Transverse colon (tissue), 4 donors: ENCODE measurements at regions of chr1 and their contacts with region 1.

Region 1: DNA sequence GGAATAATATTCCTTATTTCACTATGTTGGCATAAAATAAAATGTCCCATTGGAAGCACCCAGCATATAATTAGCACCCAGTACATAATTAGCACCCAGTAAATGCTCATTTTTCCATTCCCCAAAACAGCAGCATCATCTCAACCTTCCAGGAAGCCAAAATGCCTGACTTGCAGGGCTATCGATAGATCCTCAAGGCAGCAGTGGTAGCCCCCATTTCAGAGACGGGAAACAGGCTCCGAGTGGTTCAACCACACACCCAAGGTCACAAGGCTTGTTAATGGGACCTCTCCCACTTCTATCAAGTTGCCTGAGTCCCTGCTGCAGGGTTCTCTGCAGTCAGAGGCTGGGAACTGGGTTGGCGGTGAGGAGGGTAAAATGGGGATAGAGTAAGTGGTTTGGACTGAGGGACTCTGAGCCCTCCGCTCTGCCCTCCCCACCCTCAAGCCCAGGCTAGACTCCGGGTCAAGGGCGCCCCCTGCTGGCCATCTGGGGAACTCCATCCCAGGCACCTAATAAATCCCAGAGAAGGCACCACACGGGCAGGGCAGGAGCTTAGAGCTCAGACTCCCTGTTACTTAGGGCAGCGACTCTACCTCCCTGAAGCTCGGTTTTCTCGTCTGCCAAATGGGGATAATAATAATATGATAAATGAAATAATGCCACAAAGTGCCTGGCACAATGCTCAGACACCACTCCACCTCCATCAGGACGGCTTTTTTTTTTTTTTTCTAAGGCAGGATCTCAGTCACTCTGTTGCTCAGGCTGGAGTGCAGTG is 21.9 kb upstream of the LAPTM5 start:
- DNase-seq: peak; percentile 89
- H3K4me3 ChIP-seq: no peak overlapping the region
- H3K27ac ChIP-seq: no peak overlapping the region
- H3K4me1 ChIP-seq: peaks cover 0 to 11% (median 3%) of the 10 kb centered on the region in 4 donors
- H3K27me3 ChIP-seq: no peaks in the 10 kb centered on the region
- CTCF ChIP-seq: peak; percentile 98 to 99 (median 99)
- EP300 ChIP-seq: no peak
- POLR2A ChIP-seq: no peak

Region 2: DNA sequence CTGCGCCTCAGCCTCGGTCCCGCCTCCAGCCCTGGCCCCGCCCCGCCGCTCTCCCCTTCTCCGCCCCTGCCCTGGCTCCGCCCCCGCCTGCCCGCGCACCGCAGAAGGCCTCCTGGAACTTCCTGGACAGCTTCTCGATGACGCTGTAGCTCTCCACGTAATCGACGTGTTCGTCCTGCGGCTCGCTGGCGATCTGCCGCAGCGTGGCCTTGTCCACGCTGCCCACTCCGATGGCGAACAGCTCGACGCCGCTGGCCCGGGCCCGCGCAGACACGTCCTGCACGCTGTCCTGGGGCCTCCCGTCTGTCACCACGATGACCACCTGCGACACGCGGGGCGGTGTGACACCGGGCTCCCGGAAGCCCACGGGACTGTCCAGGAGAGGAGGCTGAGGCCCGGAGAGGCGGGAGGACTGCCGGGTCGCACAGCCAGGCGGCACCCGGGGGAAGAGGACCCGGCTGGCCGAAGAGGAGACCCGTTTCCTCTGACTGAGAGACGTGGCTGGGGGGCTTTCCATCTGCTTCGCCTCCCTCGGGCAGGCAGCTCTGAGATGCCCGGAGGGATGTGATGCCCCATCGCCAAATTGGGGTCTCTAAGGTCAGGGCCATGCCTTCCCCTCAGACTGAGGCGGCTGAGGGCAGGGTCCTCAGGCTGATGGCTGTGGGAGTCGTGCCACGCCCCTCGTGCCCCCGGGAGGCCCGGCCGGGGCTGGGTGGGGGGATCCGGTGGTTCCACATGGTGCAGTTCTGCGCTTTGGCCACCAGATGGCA is 60.7 kb before region 1 on chr1:
- in situ Hi-C with region 1: loop called in 3 of 4 experiments (anchors 5 kb)
- intact Hi-C with region 1: loop called (anchors 1 kb)
- DNase-seq: peak; percentile 85
- H3K4me3 ChIP-seq: peak overlapping the region; percentile 25 to 57 (median 44)
- H3K27ac ChIP-seq: peak overlapping the region; percentile 94 to 99 (median 98)
- H3K4me1 ChIP-seq: peaks cover 5 to 15% (median 10%) of the 10 kb centered on the region in 4 donors
- H3K27me3 ChIP-seq: no peaks in the 10 kb centered on the region
- CTCF ChIP-seq: peak; percentile 99 to 100 (median 99)
- EP300 ChIP-seq: peak; percentile 53
- POLR2A ChIP-seq: peak; percentile 93

Region 3: DNA sequence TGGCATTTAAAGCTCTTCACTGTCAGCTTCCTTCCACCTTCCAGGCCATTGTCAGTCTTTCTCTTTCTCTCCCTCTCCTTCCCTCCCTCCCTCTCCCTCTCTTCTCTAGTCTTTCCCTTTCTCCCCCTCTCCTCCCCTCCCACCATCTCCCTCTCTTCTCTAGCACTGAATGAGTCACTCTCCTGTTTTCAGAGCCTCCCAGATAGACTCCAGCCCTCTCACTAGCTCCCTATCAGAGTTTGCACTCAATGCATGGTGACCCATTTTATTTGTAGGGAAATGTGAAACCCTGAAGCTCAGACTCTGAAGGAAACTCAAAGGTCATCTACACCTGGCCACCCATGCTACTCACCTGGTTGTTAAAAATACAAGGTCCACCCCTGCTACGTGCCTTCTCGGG is 51.7 kb before region 1 on chr1:
- in situ Hi-C with region 1: loop called (anchors 5 kb)
- intact Hi-C with region 1: no loop called
- DNase-seq: no peak
- H3K4me3 ChIP-seq: no peak overlapping the region
- H3K27ac ChIP-seq: no peak overlapping the region
- H3K4me1 ChIP-seq: no peaks in the 10 kb centered on the region
- H3K27me3 ChIP-seq: no peaks in the 10 kb centered on the region
- CTCF ChIP-seq: no peak
- EP300 ChIP-seq: no peak
- POLR2A ChIP-seq: no peak

Region 4: DNA sequence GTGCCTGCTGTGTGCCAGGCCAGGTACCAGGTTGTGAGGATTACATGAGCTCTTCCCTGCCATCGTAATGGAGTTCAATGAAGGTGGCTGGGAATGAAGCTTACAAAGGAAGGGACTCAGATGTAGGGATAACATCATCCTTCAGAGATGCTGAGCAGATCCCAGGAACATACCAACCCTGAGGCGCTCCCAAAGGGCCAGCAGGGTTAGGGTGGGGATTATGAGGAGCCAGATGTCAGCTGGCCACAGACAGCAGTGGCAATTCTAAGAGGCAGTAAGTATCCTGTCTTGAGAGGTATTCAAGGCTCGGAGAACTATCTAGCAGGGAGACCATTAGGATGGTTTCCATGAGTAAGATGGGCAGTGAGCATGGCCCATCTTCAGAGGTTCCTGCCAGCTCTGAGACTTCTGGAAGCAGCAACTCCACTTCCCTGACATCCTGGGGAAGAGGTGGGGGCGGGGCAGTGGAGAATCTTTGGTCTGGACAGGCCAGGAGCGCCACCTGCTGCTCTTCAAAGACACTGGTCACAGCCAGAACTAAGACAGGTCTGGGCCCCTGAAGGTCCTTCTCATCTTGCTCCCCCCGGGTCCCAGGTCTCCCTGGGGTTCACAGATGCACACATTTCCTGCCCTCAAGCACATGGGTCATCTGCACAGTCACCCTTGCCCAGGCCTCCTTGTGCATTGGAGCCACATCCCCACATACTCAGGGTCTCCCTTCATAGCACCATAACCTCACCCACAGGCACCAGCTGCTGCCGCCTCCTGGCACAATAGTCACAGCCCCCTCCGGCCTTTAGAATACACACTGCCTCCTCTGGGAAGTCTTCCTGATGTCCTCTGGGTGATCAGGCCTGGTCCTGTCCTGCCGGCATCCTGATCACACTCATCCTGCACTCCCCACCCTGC is 131.8 kb after region 1 on chr1:
- in situ Hi-C with region 1: no loop called
- intact Hi-C with region 1: loop called (anchors 5 kb)
- DNase-seq: peak; percentile 90
- H3K4me3 ChIP-seq: no peak overlapping the region
- H3K27ac ChIP-seq: peak overlapping the region in 3 of 4 donors; percentile 26 to 58 (median 27)
- H3K4me1 ChIP-seq: peaks cover 9 to 33% (median 19%) of the 10 kb centered on the region in 4 donors
- H3K27me3 ChIP-seq: peaks cover 5% of the 10 kb centered on the region
- CTCF ChIP-seq: peak; percentile 81 to 93 (median 84)
- EP300 ChIP-seq: no peak
- POLR2A ChIP-seq: no peak

Region 5: DNA sequence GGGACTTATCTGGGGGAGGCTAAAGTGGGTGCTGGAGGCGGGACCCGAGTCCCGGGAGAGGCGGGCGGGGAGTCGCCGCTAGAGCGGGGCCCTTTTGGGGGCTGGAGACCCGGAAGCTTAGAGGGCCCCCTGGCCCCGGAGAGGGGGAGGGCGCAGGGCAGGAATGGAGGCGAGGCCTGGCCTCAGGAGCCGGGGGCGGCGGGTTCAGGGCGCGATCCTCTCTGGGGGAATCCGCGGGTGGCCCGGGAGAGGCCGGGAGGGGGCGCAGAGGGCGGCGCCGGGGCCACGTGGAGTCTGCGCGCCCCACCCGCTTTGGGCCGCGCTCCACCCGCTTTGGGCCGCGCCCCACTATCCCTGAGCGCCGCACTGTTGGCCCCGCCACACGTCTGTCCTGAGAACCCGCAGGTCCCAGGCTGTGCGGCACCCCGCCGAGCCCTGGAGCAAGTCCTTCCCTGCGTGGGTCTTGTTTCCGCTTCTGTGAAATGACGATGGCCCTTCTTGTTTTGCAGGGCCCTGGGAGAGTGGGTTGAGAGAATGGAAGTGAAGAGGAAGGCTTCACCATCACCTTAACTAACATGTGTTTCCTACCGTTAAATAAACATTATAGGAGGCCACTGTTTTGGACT is 375.8 kb after region 1 on chr1:
- in situ Hi-C with region 1: loop called in 1 of 4 experiments (anchors 25 kb)
- intact Hi-C with region 1: no loop called
- DNase-seq: peak; percentile 78
- H3K4me3 ChIP-seq: peak overlapping the region; percentile 50 to 87 (median 62)
- H3K27ac ChIP-seq: peak overlapping the region; percentile 83 to 91 (median 88)
- H3K4me1 ChIP-seq: peaks cover 0 to 13% (median 12%) of the 10 kb centered on the region in 4 donors
- H3K27me3 ChIP-seq: no peaks in the 10 kb centered on the region
- CTCF ChIP-seq: peak; percentile 25 to 47 (median 31)
- EP300 ChIP-seq: no peak
- POLR2A ChIP-seq: peak; percentile 30

Region 6: DNA sequence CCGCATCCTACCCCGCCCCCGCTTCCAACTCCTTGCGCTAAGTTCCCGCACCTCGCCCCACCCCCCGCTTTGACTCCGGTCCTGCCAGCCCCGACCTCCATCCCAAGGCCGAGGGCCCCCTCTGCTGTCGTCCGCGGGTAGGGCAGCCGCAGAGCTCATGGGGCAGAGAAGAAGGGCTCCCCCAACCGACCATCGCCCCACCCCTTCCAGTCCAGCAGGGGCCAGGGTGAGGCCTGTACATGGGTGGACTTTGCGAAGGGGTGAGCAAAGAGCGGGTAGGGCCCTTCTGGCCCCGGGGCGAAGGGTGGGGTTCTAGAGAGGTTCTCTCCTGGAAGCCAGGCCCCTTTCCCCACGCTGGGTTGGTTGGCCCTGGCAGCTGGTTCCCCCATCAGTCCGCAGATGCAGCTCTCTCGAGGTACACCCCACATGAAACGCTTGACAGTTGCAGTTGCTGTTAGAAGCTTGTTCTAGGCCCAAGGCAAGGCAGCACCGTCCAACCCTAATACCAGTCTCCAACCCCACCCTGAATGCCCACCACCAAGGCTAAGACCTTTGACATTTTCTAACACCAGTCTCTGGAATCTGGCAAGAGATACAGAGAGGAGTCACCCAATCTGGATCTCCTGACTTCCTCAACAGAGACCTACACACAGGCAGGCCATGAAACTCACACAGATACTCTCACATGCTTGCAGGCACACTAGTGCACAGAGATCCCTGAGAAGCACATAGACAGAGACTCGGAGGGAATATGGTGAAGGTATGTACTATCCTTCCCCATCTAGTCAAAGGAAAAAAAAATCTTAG is 1010.0 kb after region 1 on chr1:
- in situ Hi-C with region 1: no loop called
- intact Hi-C with region 1: no loop called
- DNase-seq: peak; percentile 98
- H3K4me3 ChIP-seq: peak overlapping the region; percentile 41 to 66 (median 53)
- H3K27ac ChIP-seq: peak overlapping the region; percentile 81 to 90 (median 88)
- H3K4me1 ChIP-seq: peaks cover 0 to 15% (median 6%) of the 10 kb centered on the region in 4 donors
- H3K27me3 ChIP-seq: no peaks in the 10 kb centered on the region
- CTCF ChIP-seq: peak; percentile 89 to 96 (median 92)
- EP300 ChIP-seq: no peak
- POLR2A ChIP-seq: no peak